ENCODE measurements at regions of chr14 and their contacts with region 1.

Region 1: GRCh38 chr14:92783816-92784431 is 10.2 kb upstream of the GOLGA5 start:
- DNase-seq: no peak
- H3K4me3 ChIP-seq: no peak overlapping the region
- H3K27ac ChIP-seq: peak overlapping the region; percentile 2 to 17 (median 14)
- H3K4me1 ChIP-seq: peaks cover 10 to 11% of the 10 kb centered on the region in 2 donors
- H3K27me3 ChIP-seq: no peaks in the 10 kb centered on the region
- CTCF ChIP-seq: peak in 5 of 6 experiments; percentile 19 to 89 (median 67)
- POLR2A ChIP-seq: no peak

Region 2: GRCh38 chr14:92686900-92687444 is 97.0 kb before region 1 on chr14:
- intact Hi-C with region 1: loop called (anchors 10 kb)
- DNase-seq: peak; percentile 82 to 84
- H3K4me3 ChIP-seq: peak overlapping the region; percentile 36 to 58 (median 40)
- H3K27ac ChIP-seq: peak overlapping the region in 1 of 3 donors; percentile 40
- H3K4me1 ChIP-seq: peaks cover 9 to 14% of the 10 kb centered on the region in 2 donors
- H3K27me3 ChIP-seq: no peaks in the 10 kb centered on the region
- CTCF ChIP-seq: peak; percentile 80 to 99 (median 96)
- POLR2A ChIP-seq: peak in 1 of 2 donors; percentile 34

Region 3: GRCh38 chr14:92719890-92720323 is 64.0 kb before region 1 on chr14:
- intact Hi-C with region 1: loop called (anchors 2 kb)
- DNase-seq: peak; percentile 44
- H3K4me3 ChIP-seq: no peak overlapping the region
- H3K27ac ChIP-seq: peak overlapping the region; percentile 54 to 90 (median 72)
- H3K4me1 ChIP-seq: peaks cover 37 to 44% of the 10 kb centered on the region in 2 donors
- H3K27me3 ChIP-seq: no peaks in the 10 kb centered on the region
- CTCF ChIP-seq: no peak
- POLR2A ChIP-seq: no peak

Measured in thyroid gland (tissue), 4 donors.